K562 (cell line): ENCODE measurements at regions of chr22 and their contacts with region 1.

Region 1: GRCh38 chr22:41780746-41781505 is 19.6 kb upstream of the CCDC134 start:
- DNase-seq: peak; percentile 25 to 59 (median 32)
- ATAC-seq: peak; percentile 84
- H3K4me3 ChIP-seq: no peak overlapping the region
- H3K27ac ChIP-seq: no peak overlapping the region
- H3K4me1 ChIP-seq: peaks cover 0 to 6% of the 10 kb centered on the region in 2 experiments; a peak in 2 of 5 replicates
- H3K27me3 ChIP-seq: no peaks in the 10 kb centered on the region
- CTCF ChIP-seq: no peak
- EP300 ChIP-seq: no peak
- POLR2A ChIP-seq: no peak
- RAD21 ChIP-seq: no peak

Region 2: GRCh38 chr22:41725510-41726110 is 55.3 kb before region 1 on chr22:
- CTCF ChIA-PET with region 1: no interaction called
- POLR2A ChIA-PET with region 1: no interaction called
- in situ Hi-C with region 1: no loop called
- intact Hi-C with region 1: no loop called
- DNase-seq: peak; percentile 52 to 78 (median 64)
- ATAC-seq: peak; percentile 98
- H3K4me3 ChIP-seq: no peak overlapping the region
- H3K27ac ChIP-seq: peak overlapping the region; percentile 59; the same call in 2 of the 3 replicates
- H3K4me1 ChIP-seq: peaks cover 5 to 7% of the 10 kb centered on the region in 2 experiments; a peak in 3 of 5 replicates
- H3K27me3 ChIP-seq: no peaks in the 10 kb centered on the region
- CTCF ChIP-seq: no peak
- EP300 ChIP-seq: peak; percentile 37; the same call in 1 of the 2 replicates
- POLR2A ChIP-seq: 0 out of 2 replicates have a peak, but pooled peaks have one; percentile 37
- RAD21 ChIP-seq: no peak

Region 3: DNA sequence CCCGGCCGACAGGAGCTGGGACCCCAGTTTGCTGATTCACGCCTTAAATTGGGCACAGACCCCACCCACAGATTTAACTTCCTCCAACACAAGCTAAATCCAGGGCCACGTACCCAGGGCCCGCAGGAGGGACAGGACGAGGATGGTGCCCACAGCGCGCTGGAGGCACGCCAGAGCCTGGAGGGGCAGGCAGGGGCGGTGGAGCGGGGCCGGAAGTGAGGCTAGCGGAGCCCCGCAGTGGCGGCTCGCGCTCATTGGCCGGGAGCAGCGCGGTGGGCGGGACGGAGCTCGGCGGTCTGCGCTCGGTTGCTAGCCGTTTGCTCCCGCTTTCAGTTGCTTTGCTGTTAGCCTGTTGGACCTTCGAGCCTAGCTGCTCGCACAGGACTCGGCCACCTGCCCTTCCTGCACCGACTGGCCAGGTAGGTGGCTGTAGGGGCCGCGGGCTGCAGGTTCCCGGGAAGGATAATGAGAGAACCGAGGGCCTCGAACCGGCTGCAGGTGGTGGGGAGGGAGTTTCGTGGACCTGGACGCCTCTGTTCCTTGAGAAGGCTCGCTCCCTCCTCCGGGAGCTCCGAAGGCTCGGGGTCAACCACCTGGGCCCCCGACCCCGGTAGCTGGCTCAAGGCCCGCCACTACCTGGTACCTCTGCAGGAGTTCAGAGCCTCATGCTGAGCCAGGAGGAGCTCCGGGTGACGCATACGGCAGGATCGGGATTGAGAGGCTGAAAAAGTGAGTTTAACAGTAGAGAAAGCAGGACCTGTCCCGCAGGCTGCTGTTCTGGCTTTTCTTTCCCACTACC is 19.6 kb after region 1 on chr22 and contains the start of gene CCDC134:
- CTCF ChIA-PET with region 1: no interaction called
- POLR2A ChIA-PET with region 1: interaction called, 10 read pairs
- in situ Hi-C with region 1: no loop called
- intact Hi-C with region 1: no loop called
- DNase-seq: peak; percentile 87 to 93 (median 92)
- ATAC-seq: peak; percentile 99
- H3K4me3 ChIP-seq: peak within 1 kb of the TSS; percentile 78
- H3K27ac ChIP-seq: peak within 1 kb of the TSS; percentile 77
- H3K4me1 ChIP-seq: peaks cover 13 to 20% of the 10 kb centered on the region in 2 experiments; a peak in 4 of 5 replicates
- H3K27me3 ChIP-seq: no peaks in the 10 kb centered on the region
- CTCF ChIP-seq: no peak
- EP300 ChIP-seq: no peak
- POLR2A ChIP-seq: peak; percentile 86
- RAD21 ChIP-seq: no peak
- polyA plus RNA-seq, gene CCDC134: 0.56 to 0.99 TPM